Activated naive CD4-positive, alpha-beta T cell treated with anti-CD3 and anti-CD28 coated beads for 36 hours (primary cell): ENCODE measurements at regions of chr19 and their contacts with region 1.

Region 1: GRCh38 chr19:34733826-34734600 is at the start of gene ZNF181:
- DNase-seq: peak; percentile 89
- H3K4me3 Mint-ChIP-seq: peak within 1 kb of the TSS; percentile 89
- H3K27ac Mint-ChIP-seq: peak within 1 kb of the TSS; percentile 98
- H3K4me1 Mint-ChIP-seq: peaks cover 23% of the 10 kb centered on the region
- H3K27me3 Mint-ChIP-seq: no peaks in the 10 kb centered on the region
- total RNA-seq, gene ZNF181: 4.3 to 4.7 TPM

Region 2: GRCh38 chr19:34381399-34382251 is 352.4 kb before region 1 on chr19:
- CTCF ChIA-PET with region 1: no interaction called
- intact Hi-C with region 1: no loop called
- DNase-seq: no peak
- H3K4me3 Mint-ChIP-seq: no peak overlapping the region
- H3K27ac Mint-ChIP-seq: no peak overlapping the region
- H3K4me1 Mint-ChIP-seq: no peaks in the 10 kb centered on the region
- H3K27me3 Mint-ChIP-seq: no peaks in the 10 kb centered on the region

Region 3: GRCh38 chr19:34677386-34678084 is 56.5 kb before region 1 on chr19 and contains the start of gene ZNF302:
- CTCF ChIA-PET with region 1: interaction called, 3 read pairs
- intact Hi-C with region 1: loop called (anchors 1 kb)
- DNase-seq: peak; percentile 98
- H3K4me3 Mint-ChIP-seq: peak within 1 kb of the TSS; percentile 97
- H3K27ac Mint-ChIP-seq: peak within 1 kb of the TSS; percentile 99
- H3K4me1 Mint-ChIP-seq: peaks cover 26% of the 10 kb centered on the region
- H3K27me3 Mint-ChIP-seq: no peaks in the 10 kb centered on the region
- total RNA-seq, gene ZNF302: 13.1 to 13.6 TPM

Region 4: DNA sequence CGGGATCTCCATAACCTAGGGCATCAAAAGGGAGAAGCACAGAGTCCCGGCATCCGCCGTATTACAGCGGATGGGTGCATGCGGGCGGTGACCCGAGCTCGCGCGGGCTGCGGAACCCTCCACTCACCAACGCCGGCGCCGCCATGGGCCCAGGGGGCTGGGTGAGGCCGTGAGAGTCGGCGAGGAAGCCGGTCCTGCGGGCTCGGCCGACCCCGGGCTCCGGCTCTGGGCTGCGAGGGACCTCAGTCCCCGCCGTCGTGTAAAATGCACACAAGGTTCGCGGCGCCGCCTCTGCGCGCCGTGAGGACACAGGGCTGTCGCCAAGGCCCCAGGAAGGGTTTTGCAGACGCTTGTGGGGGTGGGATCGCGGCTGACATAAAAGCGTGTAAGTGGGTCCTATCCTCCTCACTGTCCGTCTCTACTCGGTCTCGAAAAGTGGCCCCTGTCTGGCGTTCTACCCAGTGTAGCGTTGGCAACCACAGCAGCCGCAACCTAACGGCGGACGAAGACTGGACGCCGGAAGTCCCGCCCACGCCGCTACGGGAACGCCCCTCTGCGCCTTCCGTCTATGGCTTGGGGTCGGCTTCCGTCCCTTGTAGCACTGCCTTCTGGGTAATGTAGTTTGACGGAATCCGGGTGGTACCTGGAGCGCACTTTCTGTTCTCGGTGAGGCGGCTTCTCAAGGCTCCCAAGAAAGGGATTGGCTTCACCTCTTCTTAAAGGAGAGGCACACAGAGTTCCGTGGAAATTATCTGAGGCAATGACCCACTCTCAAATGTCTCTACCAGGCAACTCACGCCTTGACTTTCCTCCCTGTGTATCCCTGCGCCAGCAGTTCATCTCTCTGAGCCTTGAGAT is 38.9 kb after region 1 on chr19 and contains the start of gene ZNF599:
- CTCF ChIA-PET with region 1: interaction called, 3 read pairs
- intact Hi-C with region 1: loop called (anchors 1 kb)
- DNase-seq: peak; percentile 92
- H3K4me3 Mint-ChIP-seq: peak within 1 kb of the TSS; percentile 92
- H3K27ac Mint-ChIP-seq: peak within 1 kb of the TSS; percentile 79
- H3K4me1 Mint-ChIP-seq: peaks cover 12% of the 10 kb centered on the region
- H3K27me3 Mint-ChIP-seq: no peaks in the 10 kb centered on the region
- total RNA-seq, gene ZNF599: 2.8 to 3.3 TPM

Region 5: GRCh38 chr19:34853369-34853768 is 119.4 kb after region 1 on chr19:
- CTCF ChIA-PET with region 1: no interaction called
- intact Hi-C with region 1: loop called (anchors 2 kb)
- DNase-seq: no peak
- H3K4me3 Mint-ChIP-seq: no peak overlapping the region
- H3K27ac Mint-ChIP-seq: no peak overlapping the region
- H3K4me1 Mint-ChIP-seq: peaks cover 27% of the 10 kb centered on the region
- H3K27me3 Mint-ChIP-seq: no peaks in the 10 kb centered on the region

Region 6: GRCh38 chr19:34867631-34868030 is 133.6 kb after region 1 on chr19:
- CTCF ChIA-PET with region 1: no interaction called
- intact Hi-C with region 1: no loop called
- DNase-seq: no peak
- H3K4me3 Mint-ChIP-seq: no peak overlapping the region
- H3K27ac Mint-ChIP-seq: no peak overlapping the region
- H3K4me1 Mint-ChIP-seq: no peaks in the 10 kb centered on the region
- H3K27me3 Mint-ChIP-seq: no peaks in the 10 kb centered on the region

Region 7: DNA sequence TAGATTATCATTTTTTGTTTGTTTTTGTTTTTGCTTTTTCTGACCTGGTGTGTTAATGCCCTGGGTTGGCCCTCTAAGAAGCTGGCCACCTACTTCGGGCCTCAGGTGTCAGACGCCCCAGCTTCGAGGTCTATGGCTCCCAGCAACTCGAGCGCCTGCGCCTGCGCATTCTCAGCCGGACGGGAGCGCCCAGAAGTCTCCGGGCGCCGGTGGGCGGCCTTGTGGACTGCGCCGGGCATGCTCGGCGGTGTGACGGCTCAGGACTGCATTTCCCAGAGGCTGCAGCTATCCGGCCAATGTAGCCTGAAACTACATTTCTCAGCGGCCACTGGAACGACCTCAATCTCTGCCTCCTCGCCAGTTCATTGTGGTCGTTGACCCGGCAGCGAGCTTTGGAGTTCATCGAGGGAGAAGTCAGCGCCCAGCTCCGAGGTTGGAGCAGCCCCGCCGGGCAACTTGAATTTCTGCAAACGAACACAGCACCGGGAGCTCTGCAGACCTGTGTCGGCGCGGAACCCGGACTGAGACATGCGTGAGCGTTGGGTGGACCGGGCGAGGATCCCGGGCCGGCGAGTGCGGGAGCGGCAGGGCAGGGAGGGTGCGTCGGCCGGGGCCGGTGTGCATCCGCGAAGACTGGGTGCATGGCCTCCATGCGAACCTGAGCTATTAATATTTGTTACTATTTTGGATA is 192.8 kb after region 1 on chr19 and contains the start of gene ZNF30:
- CTCF ChIA-PET with region 1: no interaction called
- intact Hi-C with region 1: loop called (anchors 5 kb)
- DNase-seq: peak; percentile 93
- H3K4me3 Mint-ChIP-seq: peak within 1 kb of the TSS; percentile 89
- H3K27ac Mint-ChIP-seq: peak within 1 kb of the TSS; percentile 44
- H3K4me1 Mint-ChIP-seq: peaks cover 13% of the 10 kb centered on the region
- H3K27me3 Mint-ChIP-seq: no peaks in the 10 kb centered on the region
- total RNA-seq, gene ZNF30: 4.4 to 5.5 TPM

Region 8: GRCh38 chr19:35013031-35013819 is 279.2 kb after region 1 on chr19:
- CTCF ChIA-PET with region 1: no interaction called
- intact Hi-C with region 1: no loop called
- DNase-seq: peak; percentile 87
- H3K4me3 Mint-ChIP-seq: peak overlapping the region; percentile 60
- H3K27ac Mint-ChIP-seq: peak overlapping the region; percentile 90
- H3K4me1 Mint-ChIP-seq: peaks cover 57% of the 10 kb centered on the region
- H3K27me3 Mint-ChIP-seq: no peaks in the 10 kb centered on the region